Ovary (tissue), 10 donors: ENCODE measurements at regions of chr2 and their contacts with region 1.

Region 1: GRCh38 chr2:12716282-12717190 is at the start of gene TRIB2:
- DNase-seq: peak; percentile 89 to 93 (median 91)
- H3K4me3 ChIP-seq: peak within 1 kb of the TSS; percentile 78
- H3K27ac ChIP-seq: peak within 1 kb of the TSS; percentile 87 to 89
- H3K4me1 ChIP-seq: peaks cover 3% of the 10 kb centered on the region
- H3K27me3 ChIP-seq: no peaks in the 10 kb centered on the region
- CTCF ChIP-seq: no peak
- EP300 ChIP-seq: no peak
- POLR2A ChIP-seq: peak; percentile 56
- total RNA-seq, gene TRIB2: 68.1 to 209 (median 103) TPM

Region 2: DNA sequence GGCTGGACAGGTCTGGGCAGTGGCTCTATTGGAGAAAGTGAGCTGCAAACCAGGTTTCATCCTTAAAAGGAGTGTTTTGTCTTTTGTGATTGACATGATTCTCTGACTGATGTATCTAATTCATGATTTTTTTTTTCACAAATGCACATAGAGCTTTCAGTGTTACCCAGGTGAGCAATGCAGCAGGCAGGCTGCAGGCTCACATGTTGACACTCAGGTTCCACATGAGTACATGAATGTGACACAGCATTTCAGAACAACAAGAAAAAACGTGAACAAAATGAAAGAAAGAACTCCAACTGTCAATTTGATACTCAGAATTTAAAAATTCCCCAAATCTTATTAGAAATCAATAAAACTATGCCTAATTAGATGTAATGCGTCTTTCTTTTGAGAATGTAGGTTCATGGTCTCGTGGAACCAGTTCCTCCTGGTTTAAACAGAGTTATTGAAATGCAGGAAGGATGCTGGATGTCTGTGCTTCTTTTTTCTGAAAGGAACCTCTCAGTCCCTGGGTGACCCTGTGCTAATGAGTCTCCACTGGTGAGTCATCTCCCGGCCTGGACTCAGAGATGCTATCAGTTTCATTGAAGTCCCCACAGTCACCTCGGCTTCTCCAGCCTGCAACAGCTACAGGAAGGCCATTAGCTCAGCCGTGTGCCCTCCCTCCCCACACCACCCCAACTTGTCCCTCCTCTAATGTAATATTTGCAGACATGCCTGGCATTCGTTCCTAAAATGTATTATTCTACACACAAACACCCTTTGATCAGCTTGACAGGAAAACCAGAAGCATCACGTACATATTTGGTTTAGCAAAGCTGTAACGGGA is 539.7 kb before region 1 on chr2:
- intact Hi-C with region 1: loop called in 1 of 4 experiments (anchors 10 kb)
- DNase-seq: peak in 1 of 5 donors; percentile 44
- H3K4me3 ChIP-seq: no peak overlapping the region
- H3K27ac ChIP-seq: no peak overlapping the region
- H3K4me1 ChIP-seq: peaks cover 9% of the 10 kb centered on the region
- H3K27me3 ChIP-seq: no peaks in the 10 kb centered on the region
- CTCF ChIP-seq: no peak
- EP300 ChIP-seq: no peak
- POLR2A ChIP-seq: no peak

Region 3: GRCh38 chr2:12424809-12425208 is 291.7 kb before region 1 on chr2:
- intact Hi-C with region 1: loop called in 3 of 4 experiments (anchors 5 to 10 kb)
- DNase-seq: peak; percentile 82 to 92 (median 88)
- H3K4me3 ChIP-seq: no peak overlapping the region
- H3K27ac ChIP-seq: peak overlapping the region in 1 of 2 donors; percentile 54
- H3K4me1 ChIP-seq: peaks cover 18% of the 10 kb centered on the region
- H3K27me3 ChIP-seq: no peaks in the 10 kb centered on the region
- CTCF ChIP-seq: no peak
- EP300 ChIP-seq: no peak
- POLR2A ChIP-seq: no peak

Region 4: DNA sequence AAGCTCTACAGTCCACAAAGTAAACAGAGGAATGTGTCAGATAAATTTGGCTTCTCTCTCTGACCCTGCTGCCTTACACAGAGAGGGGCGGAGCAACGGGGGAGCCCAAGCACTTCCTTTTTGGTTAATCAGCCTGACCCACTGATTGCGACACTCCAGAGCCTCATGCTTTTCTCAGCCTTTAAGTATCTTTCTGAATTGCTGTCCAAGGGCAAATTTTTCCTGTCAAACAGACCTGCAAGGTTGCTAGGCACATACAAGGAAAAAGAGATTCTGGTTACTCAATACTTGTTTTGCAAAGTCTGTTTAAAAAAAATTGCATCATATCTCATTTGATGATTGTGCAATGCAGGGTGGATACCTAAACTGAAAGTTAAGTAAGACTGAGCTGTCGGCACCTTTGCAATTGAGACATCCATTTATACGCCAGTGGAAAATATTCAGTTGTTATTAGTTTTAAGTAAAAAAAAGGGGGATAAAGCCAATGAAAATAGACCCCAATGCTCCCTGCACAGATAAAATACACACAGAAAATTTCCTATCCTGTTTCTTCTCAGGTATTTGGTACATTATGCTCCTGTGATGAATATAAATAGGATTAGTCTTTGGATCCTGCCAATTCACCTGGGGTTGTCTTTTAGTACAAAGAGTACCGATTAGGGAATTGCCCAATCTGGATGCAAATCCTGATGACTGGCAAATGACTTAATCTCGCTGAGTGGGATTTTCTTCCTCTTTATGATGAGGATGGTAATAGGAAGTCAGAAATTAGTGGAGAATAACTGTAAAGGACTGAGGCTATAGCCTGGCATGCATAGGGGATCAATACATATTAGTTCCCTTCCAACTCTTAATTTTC is 260.0 kb before region 1 on chr2:
- intact Hi-C with region 1: loop called in 1 of 4 experiments (anchors 10 kb)
- DNase-seq: peak; percentile 81 to 97 (median 92)
- H3K4me3 ChIP-seq: no peak overlapping the region
- H3K27ac ChIP-seq: peak overlapping the region in 1 of 2 donors; percentile 87
- H3K4me1 ChIP-seq: peaks cover 6% of the 10 kb centered on the region
- H3K27me3 ChIP-seq: no peaks in the 10 kb centered on the region
- CTCF ChIP-seq: no peak
- EP300 ChIP-seq: peak; percentile 91
- POLR2A ChIP-seq: no peak

Region 5: DNA sequence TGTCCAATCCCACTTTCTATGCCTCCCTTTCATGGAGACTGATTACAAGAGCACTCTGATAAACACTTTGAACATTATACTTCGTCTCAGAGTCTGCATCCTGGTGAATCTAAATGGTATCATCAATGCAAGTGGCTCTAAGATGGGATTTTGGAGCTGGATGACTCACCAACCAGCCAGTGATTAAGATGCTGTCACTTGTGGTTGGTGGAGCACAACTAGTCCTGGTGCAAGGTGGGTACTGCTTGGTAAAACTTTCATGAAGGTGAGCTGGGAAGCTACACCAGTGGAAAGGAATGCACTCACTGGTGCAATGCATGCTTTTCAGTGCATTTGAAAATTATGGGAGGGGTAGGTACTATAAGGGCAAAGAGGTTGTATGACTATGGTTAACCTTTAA is 137.5 kb before region 1 on chr2:
- intact Hi-C with region 1: no loop called
- DNase-seq: no peak
- H3K4me3 ChIP-seq: no peak overlapping the region
- H3K27ac ChIP-seq: no peak overlapping the region
- H3K4me1 ChIP-seq: no peaks in the 10 kb centered on the region
- H3K27me3 ChIP-seq: no peaks in the 10 kb centered on the region
- CTCF ChIP-seq: no peak
- EP300 ChIP-seq: no peak
- POLR2A ChIP-seq: no peak

Region 6: DNA sequence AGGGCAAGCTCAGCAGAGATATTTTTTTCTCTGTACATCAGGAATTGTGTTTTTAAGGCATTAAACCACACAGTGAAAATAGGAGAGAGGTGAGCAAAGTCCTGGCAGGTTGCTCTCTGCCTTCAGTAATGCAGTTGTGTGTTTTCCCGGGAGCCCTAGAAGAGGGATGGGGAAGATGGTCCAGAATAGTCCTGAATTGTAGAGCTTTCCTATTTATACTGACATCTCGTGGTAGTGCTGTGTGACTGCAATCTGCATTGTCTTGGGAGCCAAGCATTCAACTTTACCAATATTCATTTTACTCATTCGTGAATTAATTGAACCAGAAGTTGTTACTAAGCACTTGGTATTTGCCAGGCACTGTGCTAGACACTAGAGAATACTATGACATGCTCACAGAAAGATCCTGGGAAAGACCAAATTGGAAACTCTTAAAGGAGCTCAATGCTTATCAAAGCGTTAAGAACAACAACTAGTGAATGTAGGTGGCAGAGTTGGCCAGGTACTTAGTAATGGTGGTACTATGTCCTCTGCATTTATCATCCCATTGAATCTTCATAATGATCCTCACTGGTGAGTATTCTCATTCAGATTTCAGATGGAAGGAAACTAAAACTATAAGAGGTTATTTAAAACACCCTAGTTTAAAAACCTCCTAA is 214.8 kb after region 1 on chr2:
- intact Hi-C with region 1: loop called in 3 of 4 experiments (anchors 5 to 10 kb)
- DNase-seq: peak in 1 of 5 donors; percentile 36
- H3K4me3 ChIP-seq: no peak overlapping the region
- H3K27ac ChIP-seq: no peak overlapping the region
- H3K4me1 ChIP-seq: peaks cover 2% of the 10 kb centered on the region
- H3K27me3 ChIP-seq: no peaks in the 10 kb centered on the region
- CTCF ChIP-seq: peak; percentile 56 to 88 (median 58)
- EP300 ChIP-seq: no peak
- POLR2A ChIP-seq: no peak